Activated CD4-positive, alpha-beta T cell treated with anti-CD3 and anti-CD28 coated beads, Interleukin-2, amount 10 ng/mL, durations not matched to agents 7 days and 5 days (primary cell): ENCODE measurements at regions of chr2 and their contacts with region 1.

Region 1: GRCh38 chr2:85327822-85328617 is at the start of gene TGOLN2:
- DNase-seq: peak; percentile 95
- H3K4me3 Mint-ChIP-seq: peak within 1 kb of the TSS; percentile 100
- H3K27ac Mint-ChIP-seq: peak within 1 kb of the TSS; percentile 100
- H3K4me1 Mint-ChIP-seq: peaks cover 37% of the 10 kb centered on the region
- H3K27me3 Mint-ChIP-seq: no peaks in the 10 kb centered on the region
- total RNA-seq, gene TGOLN2: 127 to 130 TPM

Region 2: GRCh38 chr2:85340034-85340892 is 12.2 kb after region 1 on chr2:
- CTCF ChIA-PET with region 1: interaction called, 10 read pairs
- POLR2A ChIA-PET with region 1: no interaction called
- DNase-seq: no peak
- H3K4me3 Mint-ChIP-seq: no peak overlapping the region
- H3K27ac Mint-ChIP-seq: no peak overlapping the region
- H3K4me1 Mint-ChIP-seq: no peaks in the 10 kb centered on the region
- H3K27me3 Mint-ChIP-seq: peaks cover 14% of the 10 kb centered on the region

Region 3: GRCh38 chr2:85504778-85505323 is 176.8 kb after region 1 on chr2:
- CTCF ChIA-PET with region 1: no interaction called
- POLR2A ChIA-PET with region 1: no interaction called
- DNase-seq: no peak
- H3K4me3 Mint-ChIP-seq: no peak overlapping the region
- H3K27ac Mint-ChIP-seq: no peak overlapping the region
- H3K4me1 Mint-ChIP-seq: no peaks in the 10 kb centered on the region
- H3K27me3 Mint-ChIP-seq: no peaks in the 10 kb centered on the region